BJ (cell line): ENCODE measurements at regions of chr10 and their contacts with region 1.

Region 1: DNA sequence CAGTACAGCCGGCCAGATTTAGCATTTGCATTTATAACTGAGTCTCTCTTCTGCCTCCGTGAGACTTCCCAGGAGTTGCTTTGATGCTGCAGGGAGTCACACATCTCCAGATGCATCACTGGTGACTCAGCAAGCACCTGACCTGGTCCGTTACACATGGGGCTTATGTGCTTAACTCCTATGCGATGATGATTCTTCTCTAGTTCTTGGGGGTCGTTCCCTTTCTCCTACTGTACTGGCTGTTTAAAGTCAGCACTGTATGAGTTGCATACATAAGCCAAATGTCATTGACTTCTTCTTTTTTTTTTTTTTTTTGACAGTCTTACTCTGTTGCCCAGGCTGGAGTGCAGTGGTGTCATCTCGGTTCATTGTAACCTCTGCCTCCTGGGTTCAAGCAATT is 13.0 kb upstream of the AKR1E2 start:
- DNase-seq: peak; percentile 36
- H3K4me3 ChIP-seq: no peak overlapping the region
- H3K27me3 ChIP-seq: no peaks in the 10 kb centered on the region
- CTCF ChIP-seq: no peak

Region 2: DNA sequence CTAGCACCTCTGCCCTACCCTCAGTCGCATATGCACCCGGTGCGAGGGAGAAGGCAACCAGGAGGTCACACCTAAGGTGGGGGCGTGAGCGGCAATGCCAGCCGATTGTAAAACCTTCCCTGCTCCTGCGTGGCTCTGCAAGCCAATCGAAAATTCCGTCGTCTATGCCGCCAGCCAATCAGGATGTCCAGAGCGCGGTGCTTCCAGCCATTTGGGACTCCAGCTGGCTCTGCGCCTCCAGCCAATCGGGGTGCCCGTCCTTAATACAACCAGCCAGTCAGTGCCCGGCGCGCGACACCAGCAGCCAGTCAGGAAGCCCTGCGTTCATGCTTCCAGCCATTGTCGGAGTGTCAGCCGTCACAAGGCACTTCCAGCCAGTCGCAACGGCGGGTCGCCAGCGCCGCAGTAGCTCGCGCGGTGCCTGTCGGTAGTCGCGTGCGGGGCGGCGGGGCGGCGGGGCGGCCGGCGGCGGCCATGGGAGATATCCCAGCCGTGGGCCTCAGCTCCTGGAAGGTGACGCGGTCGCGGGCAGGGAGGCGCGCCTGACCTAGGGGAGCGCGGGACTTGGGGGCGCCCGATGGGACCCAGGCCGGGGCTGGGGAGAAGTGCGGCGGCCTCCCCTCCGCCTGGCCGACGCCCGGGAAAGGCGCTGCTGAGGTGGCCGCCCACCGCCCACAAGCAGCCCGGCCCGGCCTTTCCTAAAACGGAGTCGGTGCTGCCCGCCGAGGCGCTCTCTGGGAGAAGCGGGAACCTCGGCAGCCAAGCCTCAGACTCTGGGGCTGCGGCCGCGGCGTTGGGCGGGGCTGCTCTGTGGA is 13.0 kb after region 1 on chr10 and contains the start of gene AKR1E2:
- CTCF ChIA-PET with region 1: interaction called, 15 read pairs
- POLR2A ChIA-PET with region 1: no interaction called
- DNase-seq: peak; percentile 71
- H3K4me3 ChIP-seq: peak within 1 kb of the TSS; percentile 60
- H3K27me3 ChIP-seq: no peaks in the 10 kb centered on the region
- CTCF ChIP-seq: no peak
- polyA plus RNA-seq, gene AKR1E2: 2.5 and 3.3 TPM in 2 replicates

Region 3: DNA sequence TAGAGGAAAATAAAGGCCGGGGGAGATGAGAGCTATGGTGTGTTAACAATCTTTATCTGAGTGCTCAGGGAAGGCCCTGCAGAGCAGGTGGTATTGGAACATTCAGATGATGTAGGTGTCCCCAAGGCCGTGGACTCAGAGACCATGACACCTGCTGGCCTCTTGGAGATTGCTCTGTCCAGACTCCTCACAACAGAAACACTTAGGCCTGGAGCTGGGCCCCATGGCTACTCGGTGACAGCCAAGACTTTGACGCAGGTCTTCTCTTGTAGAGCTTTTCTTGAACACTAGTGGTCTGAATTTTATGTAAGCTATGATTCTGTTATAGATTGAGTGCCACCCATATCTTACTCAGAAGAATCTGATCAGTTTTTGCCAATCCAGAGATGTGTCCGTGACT is 26.4 kb after region 1 on chr10:
- CTCF ChIA-PET with region 1: interaction called, 23 read pairs
- POLR2A ChIA-PET with region 1: no interaction called
- DNase-seq: no peak
- H3K4me3 ChIP-seq: no peak overlapping the region
- H3K27me3 ChIP-seq: no peaks in the 10 kb centered on the region
- CTCF ChIP-seq: no peak

Region 4: DNA sequence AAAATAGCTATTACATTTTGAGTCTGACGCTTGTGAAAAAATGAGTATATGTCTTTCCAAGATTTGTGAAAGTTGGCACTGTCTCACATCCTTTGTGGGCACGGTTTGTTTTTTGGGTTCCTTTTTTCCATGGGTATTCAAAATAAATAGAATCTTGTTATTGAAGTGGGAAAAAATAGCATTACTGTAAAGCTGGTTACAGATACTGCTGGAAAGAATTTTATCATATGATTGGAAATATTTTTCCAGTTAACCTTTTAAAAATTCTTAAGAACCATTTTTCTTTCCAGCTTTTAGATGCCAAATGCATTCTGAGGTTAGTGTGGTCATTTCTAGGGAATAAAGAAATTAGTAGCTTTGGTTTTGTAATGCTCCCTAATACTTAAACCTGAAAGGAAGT is 610.7 kb after region 1 on chr10:
- CTCF ChIA-PET with region 1: interaction called, 10 read pairs
- POLR2A ChIA-PET with region 1: no interaction called
- DNase-seq: no peak
- H3K4me3 ChIP-seq: no peak overlapping the region
- H3K27me3 ChIP-seq: no peaks in the 10 kb centered on the region
- CTCF ChIP-seq: no peak

Region 5: GRCh38 chr10:5434017-5434753 is 621.2 kb after region 1 on chr10:
- CTCF ChIA-PET with region 1: interaction called, 16 read pairs
- POLR2A ChIA-PET with region 1: no interaction called
- DNase-seq: no peak
- H3K4me3 ChIP-seq: no peak overlapping the region
- H3K27me3 ChIP-seq: no peaks in the 10 kb centered on the region
- CTCF ChIP-seq: peak; percentile 73

Region 6: GRCh38 chr10:5446390-5446926 is 633.4 kb after region 1 on chr10:
- CTCF ChIA-PET with region 1: interaction called, 10 read pairs
- POLR2A ChIA-PET with region 1: interaction called, 3 read pairs
- DNase-seq: peak; percentile 66
- H3K4me3 ChIP-seq: peak overlapping the region; percentile 69
- H3K27me3 ChIP-seq: no peaks in the 10 kb centered on the region
- CTCF ChIP-seq: no peak